Heart left ventricle (tissue), 16 donors: ENCODE measurements at regions of chr6 and their contacts with region 1.

Region 1: DNA sequence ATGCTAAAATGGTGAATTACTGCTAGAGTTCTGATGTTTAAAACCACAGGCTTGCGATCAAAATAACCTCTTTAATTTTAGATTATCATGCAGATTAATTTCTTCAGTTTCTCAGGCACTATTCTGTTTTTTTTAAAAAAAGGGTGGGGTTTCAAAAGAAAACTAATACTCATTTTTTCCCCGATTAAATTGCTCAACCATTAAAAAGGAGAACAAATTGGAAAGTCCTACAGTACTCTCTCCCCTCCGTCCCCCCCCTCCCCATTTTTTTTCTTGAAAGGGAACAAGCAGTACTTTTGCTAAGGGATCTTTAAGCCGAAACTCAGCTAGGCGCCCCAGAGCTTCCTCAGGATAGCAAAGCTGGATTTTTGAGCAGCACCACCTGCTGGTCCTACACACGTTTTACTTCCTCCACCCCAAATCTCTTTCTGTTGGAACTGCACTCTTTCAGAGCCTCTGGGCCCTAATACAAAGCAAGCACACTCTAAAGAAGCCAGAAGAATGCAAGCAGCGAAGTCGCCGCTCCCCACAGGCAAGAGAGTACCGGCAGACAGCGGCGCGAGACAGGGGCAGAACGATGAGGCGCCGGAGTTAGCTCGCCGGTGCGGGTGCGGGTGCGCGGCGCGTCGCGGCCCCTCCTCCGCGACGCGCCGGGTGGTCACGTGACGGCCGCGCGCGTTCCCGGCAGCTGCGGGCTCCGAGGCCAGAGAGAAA is at the start of gene RNF146:
- DNase-seq: peak; percentile 85 to 92 (median 88)
- ATAC-seq: peak; percentile 79 to 96 (median 94)
- H3K4me3 ChIP-seq: peak within 1 kb of the TSS; percentile 63 to 95 (median 88)
- H3K27ac ChIP-seq: peak within 1 kb of the TSS; percentile 95 to 100 (median 99)
- H3K4me1 ChIP-seq: peaks cover 0 to 41% (median 27%) of the 10 kb centered on the region in 12 donors
- H3K27me3 ChIP-seq: no peaks in the 10 kb centered on the region
- CTCF ChIP-seq: peak; percentile 56 to 91 (median 72)
- POLR2A ChIP-seq: no peak
- total RNA-seq, gene RNF146: 41.0 to 78.9 (median 47.9) TPM

Region 2: DNA sequence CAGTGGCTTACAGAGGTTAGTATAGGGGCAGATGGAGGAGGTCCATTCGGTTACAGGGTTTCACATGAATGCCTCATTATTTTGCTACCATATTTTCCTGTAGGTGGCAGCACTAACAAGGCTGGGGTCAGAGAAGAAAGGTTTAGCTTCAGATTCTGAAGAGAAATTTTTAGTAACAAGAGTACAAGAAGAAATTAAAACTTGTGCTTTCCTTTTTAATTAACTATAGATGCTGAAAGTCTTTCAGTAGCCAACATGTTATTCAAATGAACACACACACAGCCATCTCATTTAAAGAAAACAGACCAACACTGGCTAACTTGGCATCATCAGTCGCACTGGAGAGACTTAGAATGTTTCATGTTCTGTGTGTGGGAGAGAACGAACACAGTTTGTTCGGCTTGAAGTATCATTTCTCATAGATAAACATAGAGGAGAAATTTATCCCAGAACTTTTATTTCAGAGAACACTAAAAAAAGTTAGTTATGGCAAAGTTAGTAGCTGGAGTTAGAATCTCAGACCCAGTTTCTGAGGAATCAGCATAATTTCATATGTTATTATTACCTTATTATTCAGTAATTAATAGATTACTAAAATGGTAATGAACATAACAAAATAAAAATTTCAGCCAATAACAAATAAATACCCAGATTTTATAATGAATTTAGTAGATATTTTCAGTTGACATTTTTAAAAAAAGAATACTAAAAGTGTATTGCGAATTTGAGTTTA is 461.8 kb before region 1 on chr6:
- intact Hi-C with region 1: loop called in 2 of 10 experiments (anchors 10 kb)
- DNase-seq: peak in 1 of 5 donors; percentile 19
- ATAC-seq: peak in 3 of 4 donors; percentile 45 to 56 (median 52)
- H3K4me3 ChIP-seq: no peak overlapping the region
- H3K27ac ChIP-seq: no peak overlapping the region
- H3K4me1 ChIP-seq: no peaks in the 10 kb centered on the region
- H3K27me3 ChIP-seq: peaks cover 0 to 11% (median 0%) of the 10 kb centered on the region in 9 donors
- CTCF ChIP-seq: peak; percentile 59 to 80 (median 68)
- POLR2A ChIP-seq: no peak

Region 3: DNA sequence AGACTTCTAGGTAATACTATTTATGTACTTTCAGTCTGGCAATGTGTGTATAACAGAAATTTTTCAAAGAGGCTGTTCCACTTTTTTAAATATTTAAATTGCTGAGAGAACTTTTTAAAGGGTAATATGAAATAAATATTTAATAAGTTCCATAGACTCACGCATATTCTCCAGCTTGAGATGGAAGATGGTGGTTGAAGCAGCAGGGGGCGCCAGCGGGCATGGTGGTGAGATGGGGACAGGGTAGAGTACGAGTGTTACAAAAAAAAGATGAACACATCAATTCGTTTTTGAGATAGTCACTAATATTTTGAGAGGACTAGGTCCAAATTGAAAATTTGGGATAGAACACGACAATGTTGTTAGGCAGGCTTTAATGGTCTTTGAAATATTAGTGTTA is 79.4 kb before region 1 on chr6:
- intact Hi-C with region 1: loop called in 3 of 10 experiments (anchors 5 kb)
- DNase-seq: peak; percentile 45 to 84 (median 64)
- ATAC-seq: peak in 1 of 4 donors; percentile 60
- H3K4me3 ChIP-seq: no peak overlapping the region
- H3K27ac ChIP-seq: no peak overlapping the region
- H3K4me1 ChIP-seq: peaks cover 0 to 9% (median 0%) of the 10 kb centered on the region in 12 donors
- H3K27me3 ChIP-seq: no peaks in the 10 kb centered on the region
- CTCF ChIP-seq: peak in 11 of 12 donors; percentile 15 to 57 (median 50)
- POLR2A ChIP-seq: no peak

Region 4: GRCh38 chr6:127342946-127343808 is 76.8 kb after region 1 on chr6 and contains the start of gene ECHDC1:
- intact Hi-C with region 1: loop called in 1 of 10 experiments (anchors 5 kb)
- DNase-seq: peak; percentile 58 to 80 (median 65)
- ATAC-seq: peak; percentile 60 to 90 (median 88)
- H3K4me3 ChIP-seq: peak within 1 kb of the TSS; percentile 66 to 84 (median 78)
- H3K27ac ChIP-seq: peak within 1 kb of the TSS; percentile 31 to 89 (median 78)
- H3K4me1 ChIP-seq: peaks cover 0 to 56% (median 27%) of the 10 kb centered on the region in 12 donors
- H3K27me3 ChIP-seq: no peaks in the 10 kb centered on the region
- CTCF ChIP-seq: peak in 1 of 12 donors; percentile 23
- POLR2A ChIP-seq: peak in 1 of 2 donors; percentile 36
- total RNA-seq, gene ECHDC1: 29.8 to 51.3 (median 35.2) TPM